ENCODE measurements at regions of chr11 and their contacts with region 1.

Region 1: GRCh38 chr11:101860696-101861427 is 53.9 kb upstream of the CEP126 start:
- DNase-seq: peak; percentile 58
- H3K4me3 ChIP-seq: no peak overlapping the region
- H3K27ac ChIP-seq: no peak overlapping the region
- H3K4me1 ChIP-seq: peaks cover 31% of the 10 kb centered on the region
- H3K27me3 ChIP-seq: no peaks in the 10 kb centered on the region
- CTCF ChIP-seq: peak; percentile 67 to 76
- POLR2A ChIP-seq: no peak

Region 2: DNA sequence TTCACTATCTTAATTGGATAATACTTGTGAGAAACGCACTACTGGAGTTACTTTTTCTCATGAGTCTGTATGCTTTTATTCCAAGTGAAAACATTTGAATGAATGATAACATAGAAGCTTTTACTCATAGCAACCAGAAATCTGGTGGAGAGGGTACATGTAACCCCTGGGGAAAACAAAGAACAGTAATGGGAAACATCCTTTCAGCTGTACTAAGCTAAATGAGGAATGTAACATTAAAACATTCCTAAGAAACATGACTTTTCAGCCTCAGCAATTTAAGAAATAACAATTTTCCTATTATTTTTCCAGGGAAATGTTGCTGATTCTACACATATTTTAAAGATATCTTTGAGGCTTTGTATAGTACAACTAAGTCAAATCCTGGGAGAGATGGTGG is 43.3 kb before region 1 on chr11:
- CTCF ChIA-PET with region 1: no interaction called
- POLR2A ChIA-PET with region 1: no interaction called
- dilution Hi-C with region 1: no loop called
- intact Hi-C with region 1: no loop called
- DNase-seq: no peak
- H3K4me3 ChIP-seq: no peak overlapping the region
- H3K27ac ChIP-seq: no peak overlapping the region
- H3K4me1 ChIP-seq: no peaks in the 10 kb centered on the region
- H3K27me3 ChIP-seq: peaks cover 0 to 2% of the 10 kb centered on the region in 2 experiments
- CTCF ChIP-seq: no peak
- POLR2A ChIP-seq: no peak

Region 3: GRCh38 chr11:101880222-101880621 is 19.4 kb after region 1 on chr11:
- CTCF ChIA-PET with region 1: interaction called, 159 read pairs
- POLR2A ChIA-PET with region 1: no interaction called
- dilution Hi-C with region 1: no loop called
- intact Hi-C with region 1: loop called (anchors 1 kb)
- DNase-seq: peak; percentile 61
- H3K4me3 ChIP-seq: no peak overlapping the region
- H3K27ac ChIP-seq: no peak overlapping the region
- H3K4me1 ChIP-seq: no peaks in the 10 kb centered on the region
- H3K27me3 ChIP-seq: no peaks in the 10 kb centered on the region
- CTCF ChIP-seq: peak; percentile 37 to 53
- POLR2A ChIP-seq: no peak

Region 4: DNA sequence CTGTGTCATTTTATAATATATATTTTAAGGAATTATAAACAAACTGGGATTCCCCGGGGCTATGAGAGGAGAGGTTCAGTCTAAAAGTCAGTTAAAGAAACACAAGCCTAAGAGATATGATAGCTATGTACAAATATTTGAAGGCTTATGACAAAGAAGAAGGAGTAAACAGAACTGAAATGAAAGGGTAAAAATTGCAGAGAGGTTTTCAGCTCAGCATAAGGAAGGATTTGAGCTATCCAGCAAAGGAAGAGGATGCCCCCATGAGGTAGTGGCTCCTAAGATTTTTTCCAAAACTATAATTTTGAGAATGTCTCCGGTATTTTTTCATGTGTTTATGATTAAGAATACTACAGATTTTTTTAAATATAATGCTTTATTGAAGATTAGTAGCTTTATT is 113.4 kb after region 1 on chr11:
- CTCF ChIA-PET with region 1: interaction called, 17 read pairs
- POLR2A ChIA-PET with region 1: no interaction called
- dilution Hi-C with region 1: no loop called
- intact Hi-C with region 1: no loop called
- DNase-seq: no peak
- H3K4me3 ChIP-seq: no peak overlapping the region
- H3K27ac ChIP-seq: no peak overlapping the region
- H3K4me1 ChIP-seq: no peaks in the 10 kb centered on the region
- H3K27me3 ChIP-seq: no peaks in the 10 kb centered on the region
- CTCF ChIP-seq: no peak
- POLR2A ChIP-seq: no peak

Region 5: GRCh38 chr11:102109896-102110760 is 249.3 kb after region 1 on chr11 and contains the start of gene YAP1:
- CTCF ChIA-PET with region 1: no interaction called
- POLR2A ChIA-PET with region 1: no interaction called
- dilution Hi-C with region 1: no loop called
- intact Hi-C with region 1: loop called (anchors 1 kb)
- DNase-seq: peak; percentile 89
- H3K4me3 ChIP-seq: peak within 1 kb of the TSS; percentile 85 to 99 (median 88)
- H3K27ac ChIP-seq: peak within 1 kb of the TSS; percentile 72
- H3K4me1 ChIP-seq: peaks cover 11% of the 10 kb centered on the region
- H3K27me3 ChIP-seq: peaks cover 2 to 18% of the 10 kb centered on the region in 2 experiments
- CTCF ChIP-seq: no peak
- POLR2A ChIP-seq: no peak
- total RNA-seq, gene YAP1: 36.5 and 48.9 TPM in 2 replicates

Region 6: GRCh38 chr11:102268329-102269193 is 407.7 kb after region 1 on chr11:
- CTCF ChIA-PET with region 1: no interaction called
- POLR2A ChIA-PET with region 1: no interaction called
- dilution Hi-C with region 1: no loop called
- intact Hi-C with region 1: loop called (anchors 10 kb)
- DNase-seq: peak; percentile 51
- H3K4me3 ChIP-seq: peak overlapping the region; percentile 5 to 41 (median 7)
- H3K27ac ChIP-seq: no peak overlapping the region
- H3K4me1 ChIP-seq: peaks cover 6% of the 10 kb centered on the region
- H3K27me3 ChIP-seq: peaks cover 11 to 20% of the 10 kb centered on the region in 2 experiments
- CTCF ChIP-seq: peak in 1 of 2 donors; percentile 30
- POLR2A ChIP-seq: no peak

Region 7: GRCh38 chr11:102495161-102496042 is 634.5 kb after region 1 on chr11:
- CTCF ChIA-PET with region 1: no interaction called
- POLR2A ChIA-PET with region 1: no interaction called
- dilution Hi-C with region 1: no loop called
- intact Hi-C with region 1: loop called (anchors 2 kb)
- DNase-seq: peak; percentile 77
- H3K4me3 ChIP-seq: no peak overlapping the region
- H3K27ac ChIP-seq: no peak overlapping the region
- H3K4me1 ChIP-seq: peaks cover 13% of the 10 kb centered on the region
- H3K27me3 ChIP-seq: no peaks in the 10 kb centered on the region
- CTCF ChIP-seq: peak; percentile 30 to 51
- POLR2A ChIP-seq: no peak

Measured in endothelial cell of umbilical vein (primary cell).